AG04450 (cell line): ENCODE measurements at regions of chr1 and their contacts with region 1.

Region 1: DNA sequence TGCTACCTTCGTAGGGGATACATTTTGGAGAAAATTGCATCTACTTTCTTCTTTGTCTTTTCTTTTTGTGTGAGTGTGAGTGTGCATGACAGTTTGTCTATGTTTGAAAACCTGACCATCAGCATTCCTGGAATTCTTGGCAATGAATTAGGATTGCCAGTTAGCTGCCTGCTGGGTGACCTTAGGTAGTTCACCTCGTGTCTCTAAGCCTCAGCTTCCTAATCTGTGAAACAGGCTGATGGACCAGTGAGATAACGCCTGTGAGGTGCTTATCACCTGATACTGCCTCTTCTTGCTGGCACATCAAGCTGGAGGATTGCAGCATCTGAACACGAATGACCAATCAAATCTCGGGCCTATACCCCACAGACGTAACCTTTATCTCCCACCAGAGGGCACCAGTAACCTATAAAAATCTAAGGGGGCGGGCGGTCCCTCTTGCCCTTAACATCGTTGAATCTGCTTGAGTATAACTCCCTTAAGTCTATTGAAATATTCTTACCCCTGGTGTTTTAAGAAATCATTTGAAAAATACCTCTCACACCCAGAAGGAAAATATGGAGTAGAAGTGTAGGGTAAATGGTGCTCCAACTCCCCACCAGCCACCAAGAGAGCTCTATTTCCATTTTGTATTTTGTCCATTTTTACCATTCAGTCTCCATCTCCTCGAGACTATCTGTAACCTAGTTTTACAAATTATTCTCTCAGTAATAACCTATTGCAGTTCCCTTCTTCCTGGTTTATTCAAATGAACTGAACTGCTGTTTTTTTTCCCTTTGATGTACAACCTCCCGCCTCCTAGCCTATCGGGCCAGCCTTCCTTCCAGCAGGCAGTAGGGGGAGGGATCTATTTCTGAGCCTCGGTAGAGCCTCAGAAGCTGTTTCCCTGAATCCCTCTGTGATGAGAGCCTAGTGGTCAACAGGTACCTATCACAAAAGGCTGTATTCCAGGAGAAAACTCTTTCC is 49.7 kb downstream of the MDM4 start:
- DNase-seq: peak; percentile 53
- H3K4me3 ChIP-seq: no peak overlapping the region
- H3K27ac ChIP-seq: no peak overlapping the region
- H3K27me3 ChIP-seq: no peaks in the 10 kb centered on the region
- CTCF ChIP-seq: peak; percentile 71

Region 2: GRCh38 chr1:204578867-204579664 is 13.2 kb after region 1 on chr1:
- CTCF ChIA-PET with region 1: interaction called, 24 read pairs
- POLR2A ChIA-PET with region 1: no interaction called
- DNase-seq: no peak
- H3K4me3 ChIP-seq: no peak overlapping the region
- H3K27ac ChIP-seq: no peak overlapping the region
- H3K27me3 ChIP-seq: peaks cover 8% of the 10 kb centered on the region
- CTCF ChIP-seq: no peak

Region 3: GRCh38 chr1:204763706-204764427 is 198.0 kb after region 1 on chr1:
- CTCF ChIA-PET with region 1: interaction called, 60 read pairs
- POLR2A ChIA-PET with region 1: no interaction called
- DNase-seq: peak; percentile 23
- H3K4me3 ChIP-seq: no peak overlapping the region
- H3K27ac ChIP-seq: no peak overlapping the region
- H3K27me3 ChIP-seq: peaks cover 6% of the 10 kb centered on the region
- CTCF ChIP-seq: peak; percentile 69